ENCODE measurements at regions of chr15 and their contacts with region 1.

Region 1: GRCh38 chr15:29747837-29748417 is 74.3 kb downstream of the TJP1 start:
- DNase-seq: peak; percentile 22
- H3K4me3 ChIP-seq: no peak overlapping the region
- H3K27ac ChIP-seq: no peak overlapping the region
- H3K4me1 ChIP-seq: no peaks in the 10 kb centered on the region
- H3K27me3 ChIP-seq: no peaks in the 10 kb centered on the region
- CTCF ChIP-seq: peak; percentile 68

Region 2: DNA sequence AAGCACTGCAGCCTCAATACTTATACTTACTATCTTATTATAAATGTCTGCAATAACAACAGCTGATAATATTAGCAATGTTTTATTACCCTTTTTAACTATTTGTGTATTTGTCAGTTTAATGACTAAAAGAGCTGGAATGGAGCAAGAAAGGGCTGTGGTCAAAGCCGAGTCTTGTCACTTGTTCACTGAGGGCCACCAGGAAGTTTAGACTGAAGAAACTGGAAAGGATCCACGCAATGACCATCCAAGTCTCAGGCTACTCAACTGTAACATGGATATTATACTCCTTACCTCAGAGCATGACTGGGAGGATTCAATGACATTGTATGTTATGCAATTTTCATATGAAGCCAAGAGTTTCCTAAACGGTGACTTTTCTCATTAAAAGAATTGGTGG is 16.1 kb before region 1 on chr15:
- CTCF ChIA-PET with region 1: no interaction called
- POLR2A ChIA-PET with region 1: no interaction called
- intact Hi-C with region 1: no loop called
- DNase-seq: no peak
- H3K4me3 ChIP-seq: no peak overlapping the region
- H3K27ac ChIP-seq: no peak overlapping the region
- H3K4me1 ChIP-seq: peaks cover 4% of the 10 kb centered on the region
- H3K27me3 ChIP-seq: no peaks in the 10 kb centered on the region
- CTCF ChIP-seq: no peak

Region 3: DNA sequence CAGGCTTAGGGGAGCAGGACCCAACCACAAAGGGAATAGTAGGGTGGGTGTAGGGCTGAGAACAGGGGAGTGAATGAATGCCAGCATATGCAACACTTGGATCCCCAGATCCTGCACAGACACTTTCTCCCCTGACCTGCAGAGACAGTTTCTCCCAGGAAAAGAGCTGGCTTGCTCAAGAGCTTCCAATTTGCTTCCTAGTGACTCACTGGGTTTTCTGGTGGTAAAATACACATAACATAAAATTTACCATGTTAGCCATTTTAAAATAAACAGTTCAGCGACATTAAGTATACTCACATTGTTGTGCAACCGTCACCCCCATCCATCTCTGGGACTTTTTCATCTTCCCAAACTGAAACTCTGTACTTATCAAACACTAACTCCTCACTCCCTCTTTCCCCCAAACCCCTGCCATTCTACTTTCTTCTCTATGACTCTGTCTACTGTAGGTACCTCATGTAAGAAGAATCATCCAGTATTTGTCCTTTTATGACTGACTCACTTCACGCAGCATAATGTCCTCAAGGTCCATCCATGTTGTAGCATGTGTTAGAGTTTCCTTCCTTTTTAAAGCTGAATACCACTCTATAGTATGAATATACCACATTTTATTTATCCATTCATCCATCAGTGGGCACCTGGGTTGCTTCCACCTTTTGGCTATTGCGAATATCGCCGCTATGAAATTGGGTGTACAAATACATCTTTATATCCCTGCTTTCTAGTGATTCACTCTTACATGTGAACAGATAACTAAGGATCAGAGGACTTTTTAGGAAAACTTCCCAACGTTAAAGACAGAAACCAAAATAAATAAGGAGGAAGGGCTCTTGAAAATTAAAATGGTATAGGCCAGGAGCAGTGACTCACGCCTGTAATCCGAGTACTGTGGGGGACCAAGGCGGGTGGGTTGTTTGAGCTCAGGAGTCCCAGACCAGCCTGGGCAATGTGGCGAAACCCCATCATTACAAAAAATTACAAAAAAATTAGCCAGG is 170.0 kb after region 1 on chr15:
- CTCF ChIA-PET with region 1: interaction called, 3 read pairs
- POLR2A ChIA-PET with region 1: no interaction called
- intact Hi-C with region 1: loop called (anchors 2 kb)
- DNase-seq: no peak
- H3K4me3 ChIP-seq: no peak overlapping the region
- H3K27ac ChIP-seq: no peak overlapping the region
- H3K4me1 ChIP-seq: no peaks in the 10 kb centered on the region
- H3K27me3 ChIP-seq: no peaks in the 10 kb centered on the region
- CTCF ChIP-seq: no peak

Region 4: DNA sequence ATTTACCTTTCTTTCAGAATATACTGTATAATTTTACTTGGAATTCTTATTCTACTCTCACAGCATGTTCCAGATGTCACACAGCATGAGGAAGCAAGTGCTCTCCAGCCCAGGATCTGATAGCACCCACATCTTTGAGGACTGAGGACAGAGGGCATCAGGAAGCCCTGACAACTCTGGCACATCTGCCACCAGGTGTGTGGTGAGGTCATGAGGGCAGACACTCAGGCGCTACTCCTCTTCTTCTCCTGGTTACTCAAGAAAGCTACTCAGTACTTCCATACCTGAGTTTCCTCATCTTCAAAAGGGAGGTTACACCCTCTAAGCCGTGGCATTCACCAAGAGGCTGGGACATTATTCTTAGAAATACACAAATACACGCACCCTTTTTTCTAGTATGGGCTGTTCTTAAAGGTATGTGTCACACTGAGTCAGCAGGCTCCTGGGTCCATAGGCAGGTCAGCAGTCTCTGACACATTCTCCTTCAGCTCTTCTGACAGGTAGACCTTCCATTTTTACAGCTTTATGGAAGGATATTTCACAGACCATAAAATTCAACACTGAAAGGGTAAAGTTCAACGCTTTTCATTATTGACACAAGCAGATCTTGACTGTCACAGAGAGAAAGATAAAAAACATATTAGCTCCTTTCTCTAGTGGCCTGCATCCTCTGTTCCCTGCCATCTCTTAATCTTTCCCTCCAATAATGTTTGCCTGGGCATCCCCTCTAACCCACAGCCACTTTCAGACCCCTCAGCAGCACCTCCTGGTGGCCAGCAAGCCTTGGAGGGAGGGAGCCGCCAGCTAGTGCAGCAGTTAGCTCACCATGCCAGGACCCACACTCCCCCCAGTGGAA is 177.5 kb after region 1 on chr15:
- CTCF ChIA-PET with region 1: interaction called, 42 read pairs
- POLR2A ChIA-PET with region 1: no interaction called
- intact Hi-C with region 1: loop called (anchors 2 kb)
- DNase-seq: peak; percentile 85
- H3K4me3 ChIP-seq: no peak overlapping the region
- H3K27ac ChIP-seq: no peak overlapping the region
- H3K4me1 ChIP-seq: no peaks in the 10 kb centered on the region
- H3K27me3 ChIP-seq: no peaks in the 10 kb centered on the region
- CTCF ChIP-seq: peak; percentile 93

Region 5: DNA sequence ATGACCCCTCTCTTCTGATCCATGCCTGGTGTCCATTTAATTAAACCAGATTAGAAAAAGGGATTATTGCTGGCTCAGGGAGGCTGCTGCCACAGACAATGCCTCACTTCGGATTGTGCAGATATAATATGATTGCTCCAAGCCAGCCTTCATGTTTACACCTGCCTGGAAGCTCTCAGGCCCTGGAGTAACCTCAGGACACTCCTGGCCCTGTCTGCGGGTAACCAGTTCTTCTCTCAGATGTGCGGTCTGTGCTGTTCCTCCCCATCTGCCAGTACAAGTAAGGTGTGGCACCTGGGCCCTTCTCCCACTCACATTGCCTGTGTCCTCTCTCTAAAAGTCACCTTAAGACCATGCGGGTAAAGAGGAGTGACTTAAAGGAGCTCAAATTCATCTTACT is 326.0 kb after region 1 on chr15:
- CTCF ChIA-PET with region 1: interaction called, 10 read pairs
- POLR2A ChIA-PET with region 1: no interaction called
- intact Hi-C with region 1: no loop called
- DNase-seq: no peak
- H3K4me3 ChIP-seq: no peak overlapping the region
- H3K27ac ChIP-seq: no peak overlapping the region
- H3K4me1 ChIP-seq: no peaks in the 10 kb centered on the region
- H3K27me3 ChIP-seq: no peaks in the 10 kb centered on the region
- CTCF ChIP-seq: no peak